ENCODE measurements at regions of chr3 and their contacts with region 1.

Region 1: DNA sequence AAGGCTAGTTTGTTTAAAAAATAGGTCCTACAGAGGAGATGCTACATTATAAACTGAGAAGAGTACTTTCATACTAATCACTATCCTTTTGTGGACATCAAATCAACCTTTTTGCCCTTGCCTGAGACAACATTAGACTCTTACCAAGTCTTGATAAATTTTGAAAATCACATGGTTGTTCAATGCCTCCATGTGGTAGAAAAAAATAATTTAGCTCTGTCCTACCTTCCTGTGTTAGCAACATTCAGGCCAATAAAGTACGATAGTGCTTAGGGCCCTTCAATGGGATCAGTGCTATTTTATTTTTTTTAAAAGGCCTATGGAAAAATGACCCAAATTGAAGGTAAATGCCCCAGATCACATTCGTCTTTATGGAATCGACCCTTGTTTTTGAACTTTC is 5.0 kb upstream of the UBE2E1 start:
- DNase-seq: peak; percentile 50
- ATAC-seq: peak; percentile 61
- H3K4me3 ChIP-seq: no peak overlapping the region
- H3K27ac ChIP-seq: no peak overlapping the region
- H3K4me1 ChIP-seq: peaks cover 15% of the 10 kb centered on the region
- H3K27me3 ChIP-seq: no peaks in the 10 kb centered on the region
- CTCF ChIP-seq: peak; percentile 47; the same call in 1 of the 2 replicates

Region 2: DNA sequence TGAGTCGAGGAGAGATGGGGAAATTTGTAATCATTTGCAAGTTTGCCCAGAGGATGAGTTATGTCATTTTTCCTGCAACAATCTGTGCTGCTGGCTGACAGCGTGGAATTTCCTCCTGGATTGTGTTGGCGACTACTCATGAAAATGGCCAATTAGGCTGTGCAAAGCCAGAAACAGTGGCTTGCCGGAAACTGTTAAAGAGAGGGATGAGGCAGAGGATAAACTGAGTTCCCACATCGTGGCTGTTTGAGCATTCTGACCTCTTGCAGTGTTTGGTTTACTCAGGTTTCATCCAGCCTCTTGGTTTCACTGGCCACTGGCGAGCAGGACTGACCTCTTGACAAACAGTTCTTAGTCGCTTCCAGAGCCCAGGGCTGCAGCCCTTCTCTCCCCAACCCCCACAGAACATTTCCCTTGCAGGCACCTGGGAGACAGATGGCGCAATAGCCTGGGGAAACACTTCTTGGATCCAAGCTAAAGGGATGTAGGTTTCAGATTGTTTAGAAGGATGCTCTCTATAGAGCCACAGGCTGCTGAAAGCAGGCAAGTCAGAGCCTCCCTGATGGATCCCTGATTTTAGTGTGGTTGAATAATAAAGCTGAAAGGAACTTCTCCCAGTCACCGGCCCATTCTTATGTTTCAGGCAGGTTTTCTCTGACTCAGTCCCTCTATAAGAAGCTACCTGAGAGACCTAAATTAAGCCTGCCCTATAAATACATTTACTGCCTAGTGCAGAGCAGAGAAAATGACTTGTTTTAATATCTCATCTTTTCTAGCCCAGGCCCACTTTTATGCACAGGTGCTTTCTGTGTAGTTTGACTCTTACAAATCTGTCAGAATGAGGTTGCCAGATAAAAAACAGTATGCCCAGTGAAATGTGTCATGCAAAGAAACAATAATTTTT is 87.8 kb before region 1 on chr3:
- CTCF ChIA-PET with region 1: no interaction called
- POLR2A ChIA-PET with region 1: no interaction called
- intact Hi-C with region 1: loop called (anchors 1 kb)
- DNase-seq: peak; percentile 82
- ATAC-seq: peak; percentile 92
- H3K4me3 ChIP-seq: peak overlapping the region; percentile 47; the same call in 1 of the 2 replicates
- H3K27ac ChIP-seq: peak overlapping the region; percentile 17
- H3K4me1 ChIP-seq: peaks cover 19% of the 10 kb centered on the region
- H3K27me3 ChIP-seq: no peaks in the 10 kb centered on the region
- CTCF ChIP-seq: peak; percentile 62

Region 3: GRCh38 chr3:23767546-23767945 is 33.2 kb before region 1 on chr3:
- CTCF ChIA-PET with region 1: no interaction called
- POLR2A ChIA-PET with region 1: interaction called, 16 read pairs
- intact Hi-C with region 1: no loop called
- DNase-seq: no peak
- ATAC-seq: no peak
- H3K4me3 ChIP-seq: no peak overlapping the region
- H3K27ac ChIP-seq: no peak overlapping the region
- H3K4me1 ChIP-seq: no peaks in the 10 kb centered on the region
- H3K27me3 ChIP-seq: no peaks in the 10 kb centered on the region
- CTCF ChIP-seq: no peak